Breast epithelium (tissue), 4 donors: ENCODE measurements at regions of chr6 and their contacts with region 1.

Region 1: DNA sequence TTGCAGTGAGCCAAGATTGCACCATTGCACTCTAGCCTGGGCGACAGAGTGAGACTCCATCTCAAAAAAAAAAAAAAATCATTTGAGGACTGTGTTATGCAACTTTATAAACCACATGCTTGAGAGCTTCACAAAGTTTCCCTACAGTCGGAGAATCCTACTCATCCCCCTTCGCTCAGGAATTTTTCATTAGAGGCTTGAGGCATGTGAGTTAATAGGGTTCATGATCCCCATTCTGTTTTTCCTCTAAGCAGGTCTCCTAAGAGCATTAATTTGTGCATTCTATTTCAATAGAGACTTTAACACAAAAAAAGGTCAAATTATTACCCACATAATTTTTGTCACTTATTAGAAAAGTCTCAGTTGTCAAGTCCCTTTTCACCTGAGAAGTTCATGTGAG is 103.7 kb upstream of the SOX4 start:
- DNase-seq: no peak
- H3K4me3 ChIP-seq: no peak overlapping the region
- H3K27ac ChIP-seq: no peak overlapping the region
- H3K4me1 ChIP-seq: no peaks in the 10 kb centered on the region
- H3K27me3 ChIP-seq: no peaks in the 10 kb centered on the region
- CTCF ChIP-seq: no peak
- POLR2A ChIP-seq: no peak

Region 2: GRCh38 chr6:21451546-21452013 is 38.2 kb before region 1 on chr6:
- intact Hi-C with region 1: no loop called
- DNase-seq: no peak
- H3K4me3 ChIP-seq: no peak overlapping the region
- H3K27ac ChIP-seq: no peak overlapping the region
- H3K4me1 ChIP-seq: peaks cover 0 to 4% of the 10 kb centered on the region in 2 donors
- H3K27me3 ChIP-seq: no peaks in the 10 kb centered on the region
- CTCF ChIP-seq: no peak
- POLR2A ChIP-seq: no peak

Region 3: GRCh38 chr6:22558334-22558747 is 1068.5 kb after region 1 on chr6:
- intact Hi-C with region 1: loop called (anchors 5 kb)
- DNase-seq: no peak
- H3K4me3 ChIP-seq: no peak overlapping the region
- H3K27ac ChIP-seq: no peak overlapping the region
- H3K4me1 ChIP-seq: no peaks in the 10 kb centered on the region
- H3K27me3 ChIP-seq: no peaks in the 10 kb centered on the region
- CTCF ChIP-seq: no peak
- POLR2A ChIP-seq: no peak

Region 4: DNA sequence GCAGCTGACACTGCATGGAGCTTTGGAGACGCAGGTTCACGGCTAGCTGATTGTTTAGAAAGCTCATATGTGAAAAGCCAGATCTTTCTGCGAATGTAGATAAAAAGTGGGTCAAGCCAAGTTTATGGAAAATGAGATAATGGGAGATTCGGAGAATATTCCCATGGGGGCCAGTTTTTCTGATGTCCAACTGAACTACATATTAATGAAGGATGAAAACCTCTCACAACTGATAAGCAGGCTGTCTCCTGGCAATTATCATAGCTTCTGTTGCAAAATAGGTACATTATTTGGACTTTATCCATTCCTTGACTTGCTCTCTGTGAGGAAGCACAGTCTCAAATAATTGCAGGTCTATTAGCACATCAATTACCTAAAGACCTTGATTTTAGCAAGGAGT is 1100.6 kb after region 1 on chr6:
- intact Hi-C with region 1: no loop called
- DNase-seq: no peak
- H3K4me3 ChIP-seq: no peak overlapping the region
- H3K27ac ChIP-seq: no peak overlapping the region
- H3K4me1 ChIP-seq: no peaks in the 10 kb centered on the region
- H3K27me3 ChIP-seq: no peaks in the 10 kb centered on the region
- CTCF ChIP-seq: no peak
- POLR2A ChIP-seq: no peak